ENCODE measurements at regions of chr12 and their contacts with region 1.

Region 1: DNA sequence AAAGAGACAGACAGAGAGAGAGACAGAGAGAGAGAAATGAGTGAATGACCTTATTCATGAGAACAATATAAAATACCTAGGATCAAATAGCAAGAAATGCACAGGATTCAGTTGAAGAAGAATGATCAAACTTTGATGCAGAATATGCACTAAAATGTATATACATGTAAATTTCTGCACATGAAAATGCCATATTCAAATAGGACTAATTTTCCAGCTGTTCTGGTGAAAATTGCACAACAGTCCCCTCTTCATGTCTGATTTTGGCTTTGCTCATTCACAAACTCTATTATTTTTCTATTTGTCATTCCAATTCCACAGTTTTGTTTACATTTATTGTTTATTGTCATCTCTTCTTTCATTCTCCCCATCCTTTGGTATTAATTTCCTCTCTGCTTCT is 34.2 kb downstream of the PRB2 start:
- DNase-seq: no peak
- H3K4me3 ChIP-seq: no peak overlapping the region
- H3K27ac ChIP-seq: no peak overlapping the region
- H3K4me1 ChIP-seq: peaks cover 20% of the 10 kb centered on the region
- H3K27me3 ChIP-seq: no peaks in the 10 kb centered on the region
- CTCF ChIP-seq: no peak
- POLR2A ChIP-seq: no peak

Region 2: GRCh38 chr12:10170292-10170691 is 1190.9 kb before region 1 on chr12:
- CTCF ChIA-PET with region 1: no interaction called
- POLR2A ChIA-PET with region 1: interaction called, 10 read pairs
- dilution Hi-C with region 1: no loop called
- intact Hi-C with region 1: no loop called
- DNase-seq: no peak
- H3K4me3 ChIP-seq: no peak overlapping the region
- H3K27ac ChIP-seq: no peak overlapping the region
- H3K4me1 ChIP-seq: no peaks in the 10 kb centered on the region
- H3K27me3 ChIP-seq: peaks cover 3 to 4% of the 10 kb centered on the region in 2 experiments
- CTCF ChIP-seq: no peak
- POLR2A ChIP-seq: no peak

Measured in endothelial cell of umbilical vein (primary cell).